Common myeloid progenitor, CD34-positive (primary cell): ENCODE measurements at regions of chr11 and their contacts with region 1.

Region 1: DNA sequence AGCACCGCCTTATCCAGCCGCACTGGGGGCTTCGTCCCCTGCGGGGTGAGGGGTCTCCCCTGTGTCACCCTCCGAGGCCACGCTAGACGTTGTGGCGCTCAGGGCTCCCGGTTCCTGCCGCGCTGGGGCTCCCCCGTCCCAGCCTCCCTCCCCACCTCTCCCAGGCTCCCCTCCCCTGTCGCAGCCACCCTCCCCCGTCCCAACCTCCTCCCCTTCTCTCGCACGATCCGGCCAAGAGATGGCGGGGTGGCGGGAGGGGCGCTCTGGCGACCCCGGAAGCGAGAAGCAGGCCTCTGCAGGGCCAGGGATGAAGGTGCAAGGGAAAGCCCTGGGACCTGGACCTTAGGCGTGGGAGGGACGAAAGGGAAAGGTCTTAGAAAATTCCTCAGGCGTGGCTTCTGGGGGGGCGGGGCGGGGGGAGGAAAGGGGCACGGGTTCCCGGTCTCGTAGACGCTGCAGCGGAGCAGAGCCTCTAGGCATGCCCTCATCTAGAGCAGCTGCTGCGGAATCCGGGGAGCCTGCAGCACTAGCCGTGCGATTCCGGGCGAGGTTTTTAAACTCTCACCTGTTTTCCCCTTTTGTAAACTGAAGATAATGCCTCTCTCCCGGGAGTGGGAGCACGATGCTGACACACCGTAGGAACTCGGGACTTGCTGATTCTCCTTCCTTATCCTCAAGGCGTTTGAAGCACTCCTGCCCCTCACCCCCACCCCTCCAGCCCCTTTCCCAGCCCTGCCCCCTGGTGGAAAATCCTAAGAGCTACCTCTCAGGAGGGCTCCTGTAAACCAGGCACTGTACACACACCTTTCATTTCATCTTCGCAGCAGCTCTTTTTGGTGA is 14.4 kb downstream of the KCNJ5 start:
- DNase-seq: peak; percentile 50 to 78 (median 59)
- H3K4me3 ChIP-seq: peak overlapping the region in 6 of 7 experiments; percentile 51 to 77 (median 61)
- H3K27ac ChIP-seq: no peak overlapping the region
- H3K4me1 ChIP-seq: peaks cover 12 to 63% (median 48%) of the 10 kb centered on the region in 4 experiments
- H3K27me3 ChIP-seq: peaks cover 0 to 9% (median 2%) of the 10 kb centered on the region in 5 experiments

Region 2: GRCh38 chr11:128884703-128885338 is 20.7 kb before region 1 on chr11:
- CTCF ChIA-PET with region 1: interaction called, 153 read pairs
- POLR2A ChIA-PET with region 1: no interaction called
- DNase-seq: peak; percentile 74 to 81 (median 74)
- H3K4me3 ChIP-seq: no peak overlapping the region
- H3K27ac ChIP-seq: no peak overlapping the region
- H3K4me1 ChIP-seq: peaks cover 0 to 7% (median 0%) of the 10 kb centered on the region in 4 experiments
- H3K27me3 ChIP-seq: peaks cover 3 to 28% (median 24%) of the 10 kb centered on the region in 5 experiments

Region 3: DNA sequence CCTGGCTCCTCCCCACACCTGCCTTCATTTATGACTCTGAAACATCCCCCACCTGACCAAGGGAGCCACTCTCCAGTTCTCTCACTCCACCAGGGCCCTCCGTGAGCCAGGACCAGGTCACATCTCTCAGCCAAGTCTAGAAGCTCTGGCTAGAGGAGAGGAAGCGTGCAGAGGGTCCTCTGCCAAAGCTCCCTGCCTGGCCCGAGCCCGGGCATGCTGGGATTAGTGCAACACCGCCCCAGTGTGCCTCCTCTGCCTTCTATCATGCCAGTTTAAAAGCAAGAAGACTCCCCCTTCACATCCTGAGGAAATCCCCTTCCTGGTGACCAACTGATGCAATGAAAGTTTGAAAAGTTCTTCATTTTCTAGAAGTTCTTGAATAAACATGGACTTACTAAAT is 13.7 kb after region 1 on chr11:
- CTCF ChIA-PET with region 1: interaction called, 22 read pairs
- POLR2A ChIA-PET with region 1: no interaction called
- DNase-seq: peak in 2 of 3 donors; percentile 68 to 72
- H3K4me3 ChIP-seq: peak overlapping the region in 1 of 7 experiments; percentile 12
- H3K27ac ChIP-seq: no peak overlapping the region
- H3K4me1 ChIP-seq: peaks cover 0 to 34% (median 20%) of the 10 kb centered on the region in 4 experiments
- H3K27me3 ChIP-seq: peaks cover 0 to 2% (median 0%) of the 10 kb centered on the region in 5 experiments

Region 4: GRCh38 chr11:128936606-128937251 is 31.2 kb after region 1 on chr11:
- CTCF ChIA-PET with region 1: interaction called, 10 read pairs
- POLR2A ChIA-PET with region 1: interaction called, 3 read pairs
- DNase-seq: no peak
- H3K4me3 ChIP-seq: no peak overlapping the region
- H3K27ac ChIP-seq: no peak overlapping the region
- H3K4me1 ChIP-seq: no peaks in the 10 kb centered on the region
- H3K27me3 ChIP-seq: peaks cover 0 to 5% (median 0%) of the 10 kb centered on the region in 5 experiments

Region 5: DNA sequence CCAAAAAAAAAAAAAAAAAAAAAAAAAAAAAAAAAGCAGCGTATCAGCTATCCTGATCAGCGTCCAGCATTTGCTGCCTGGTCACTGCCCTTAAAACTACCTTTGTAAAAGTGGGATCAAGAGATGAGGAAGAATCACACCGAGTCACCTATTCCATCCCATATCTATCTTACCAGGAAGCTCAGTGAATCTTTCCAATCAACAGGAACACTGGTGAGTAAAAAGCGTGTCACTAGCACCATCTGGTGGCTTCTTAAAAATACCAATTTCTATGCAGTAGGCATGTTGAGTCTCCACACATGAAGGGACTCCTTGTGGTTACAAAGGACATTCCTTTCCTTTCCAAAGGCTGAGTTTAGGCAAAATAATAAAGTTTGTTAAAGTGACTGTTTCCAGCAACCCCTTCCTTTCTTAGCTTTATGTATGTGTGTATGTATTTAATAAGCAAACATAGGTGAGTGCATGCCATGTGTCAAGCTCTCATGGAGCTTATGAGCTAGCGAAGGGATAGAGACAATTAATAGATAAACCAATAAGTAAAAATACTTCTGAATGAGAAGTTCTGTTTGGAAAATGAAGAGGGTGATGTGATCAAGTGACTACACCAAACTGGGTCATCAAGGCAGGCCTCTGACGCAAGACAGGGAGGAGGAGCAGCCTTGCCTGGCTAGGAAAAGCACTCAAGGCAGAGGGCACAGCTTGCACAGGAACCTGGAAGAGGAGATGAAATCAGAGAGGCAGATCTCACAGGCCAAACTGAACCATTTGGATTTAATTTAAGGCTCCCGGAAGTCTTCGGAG is 51.0 kb after region 1 on chr11:
- CTCF ChIA-PET with region 1: interaction called, 17 read pairs
- POLR2A ChIA-PET with region 1: no interaction called
- DNase-seq: peak; percentile 61 to 64 (median 64)
- H3K4me3 ChIP-seq: no peak overlapping the region
- H3K27ac ChIP-seq: no peak overlapping the region
- H3K4me1 ChIP-seq: no peaks in the 10 kb centered on the region
- H3K27me3 ChIP-seq: peaks cover 0 to 7% (median 0%) of the 10 kb centered on the region in 5 experiments